ENCODE measurements at regions of chr19 and their contacts with region 1.

Region 1: DNA sequence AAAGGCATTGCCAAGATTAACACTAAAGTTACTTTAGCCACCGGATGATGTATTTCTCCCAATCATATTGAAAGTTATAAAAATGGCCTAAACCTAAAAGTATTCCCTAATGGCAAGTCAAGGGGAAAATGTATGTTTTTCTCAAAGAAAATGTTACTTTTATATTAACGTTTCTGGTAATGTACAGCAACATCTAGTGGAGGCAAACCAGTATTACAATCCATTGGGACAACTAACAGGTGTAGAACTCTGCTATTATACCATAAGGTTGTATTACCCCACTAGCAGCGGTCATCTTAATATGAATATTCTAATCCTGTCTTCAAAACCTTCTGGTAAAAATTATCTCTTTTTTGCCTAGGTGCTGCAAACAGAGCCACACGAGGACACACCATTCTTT is 69.2 kb downstream of the ZNF100 start:
- DNase-seq: no peak
- ATAC-seq: peak; percentile 73

Region 2: DNA sequence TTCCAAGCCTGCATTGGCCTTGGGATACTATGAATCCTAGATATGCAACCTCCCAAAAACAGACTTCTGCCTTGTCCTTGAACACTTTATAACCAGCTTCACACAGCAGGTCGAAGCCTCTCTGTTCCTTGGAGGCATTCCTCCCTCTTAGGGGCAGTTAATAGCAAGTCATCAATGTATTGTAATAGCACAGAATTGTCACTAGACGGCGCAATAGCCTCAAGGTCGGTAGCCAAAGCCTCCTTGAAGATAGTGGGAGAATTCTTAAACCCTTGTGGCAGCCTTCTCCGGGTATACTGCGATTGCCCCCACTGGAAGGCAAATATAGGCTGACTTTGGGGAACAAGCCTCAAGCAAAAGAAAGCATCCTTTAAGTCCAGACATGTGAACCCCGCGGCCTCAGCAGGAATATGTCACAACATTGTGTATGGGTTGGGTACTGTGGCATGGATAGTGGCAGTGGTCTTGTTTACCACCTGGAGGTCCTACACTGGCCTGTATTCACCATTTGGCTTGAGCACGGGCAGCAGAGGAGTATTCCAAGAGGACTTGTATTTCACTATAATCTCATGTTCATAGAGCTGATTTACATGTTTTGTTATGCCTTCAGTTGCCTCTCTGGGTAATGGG is 495.2 kb before region 1 on chr19:
- intact Hi-C with region 1: loop called (anchors 10 kb)
- DNase-seq: no peak
- ATAC-seq: peak; percentile 62

Region 3: GRCh38 chr19:21482863-21483276 is 215.3 kb before region 1 on chr19:
- intact Hi-C with region 1: loop called (anchors 5 kb)
- DNase-seq: peak; percentile 72
- ATAC-seq: peak; percentile 92